ENCODE measurements at regions of chr3 and their contacts with region 1.

Region 1: DNA sequence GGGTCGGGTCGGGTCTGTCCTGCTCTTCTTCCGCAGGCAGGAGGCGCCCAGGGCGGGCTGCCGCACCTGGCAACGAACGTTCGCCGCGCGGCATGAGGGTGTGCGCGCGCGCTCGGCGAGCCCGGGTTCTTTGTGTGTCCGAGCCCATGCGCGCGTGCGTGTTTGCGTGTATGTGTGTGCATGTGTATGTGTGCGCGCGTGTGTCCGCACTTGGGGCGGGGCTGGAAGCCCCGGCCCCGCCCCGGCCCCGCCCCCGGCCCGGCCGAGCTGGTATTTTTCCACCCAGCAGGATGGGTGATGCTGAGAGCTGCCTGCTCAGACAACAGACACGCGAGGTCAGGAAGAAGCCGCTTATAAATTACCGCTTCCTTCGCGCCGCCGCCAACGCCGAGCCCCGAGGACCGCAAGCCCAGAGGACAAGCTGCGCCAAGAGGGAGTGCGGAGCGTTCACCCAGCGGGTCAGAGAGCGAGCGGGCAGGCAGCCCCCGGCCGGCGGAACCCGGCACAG is at the start of gene SLC6A6:
- DNase-seq: peak; percentile 99
- H3K4me3 ChIP-seq: peak within 1 kb of the TSS; percentile 96
- H3K27ac ChIP-seq: peak within 1 kb of the TSS; percentile 91
- H3K4me1 ChIP-seq: peaks cover 75% of the 10 kb centered on the region
- CTCF ChIP-seq: peak; percentile 62
- total RNA-seq, gene SLC6A6: 36.7 and 43.0 TPM in 2 replicates

Region 2: DNA sequence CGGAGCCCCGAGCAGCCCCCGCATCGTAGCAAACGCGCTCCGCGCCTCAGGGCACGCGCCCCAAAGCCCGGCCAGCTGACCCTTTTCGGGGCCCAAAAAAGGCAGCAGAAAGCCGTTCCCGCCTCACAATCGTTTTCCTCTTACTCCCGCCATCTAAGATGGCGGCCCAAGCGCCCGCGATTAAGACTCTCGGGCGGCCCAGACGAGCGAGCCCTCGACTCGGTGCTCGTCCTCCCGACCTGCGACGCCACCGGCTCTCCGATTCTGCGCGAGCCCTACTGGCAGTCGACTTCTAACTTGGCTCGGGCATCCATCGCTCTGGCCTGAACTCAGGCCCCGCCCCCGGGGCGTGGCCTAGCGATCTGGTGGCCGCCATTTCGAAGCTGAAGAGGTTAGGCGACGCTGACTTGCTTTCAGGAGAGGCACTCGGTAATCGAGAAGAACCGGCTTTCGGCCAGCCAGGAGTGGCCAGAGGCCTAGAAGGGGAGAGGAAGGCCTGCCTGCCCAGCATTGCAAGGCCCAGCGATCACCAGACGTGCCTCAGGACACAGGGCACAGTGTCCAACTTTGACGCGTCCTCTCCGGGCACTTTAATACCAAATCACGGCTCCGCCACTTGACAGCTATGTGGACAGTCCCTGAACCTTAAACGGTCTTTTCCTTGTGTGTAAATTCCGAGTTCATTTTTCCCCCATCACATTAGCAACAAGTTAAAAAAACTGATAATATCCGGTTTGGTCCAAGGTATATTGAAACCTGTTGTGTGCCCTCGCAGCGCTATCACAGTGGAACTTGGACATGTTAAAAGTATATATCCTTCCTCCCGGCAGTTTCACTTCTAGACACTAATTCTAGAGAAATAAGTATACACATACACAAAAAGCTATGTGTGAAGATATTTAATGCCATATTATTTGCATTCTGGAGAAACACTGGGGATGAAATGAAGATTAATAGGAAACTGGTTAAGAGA is 1738.1 kb before region 1 on chr3 and contains the start of gene RAF1:
- CTCF ChIA-PET with region 1: no interaction called
- POLR2A ChIA-PET with region 1: no interaction called
- intact Hi-C with region 1: loop called (anchors 10 kb)
- DNase-seq: peak; percentile 99
- H3K4me3 ChIP-seq: peak within 1 kb of the TSS; percentile 83
- H3K27ac ChIP-seq: peak within 1 kb of the TSS; percentile 83
- H3K4me1 ChIP-seq: peaks cover 30% of the 10 kb centered on the region
- CTCF ChIP-seq: no peak
- total RNA-seq, gene RAF1: 88.0 and 91.0 TPM in 2 replicates

Region 3: GRCh38 chr3:14377348-14378169 is 24.8 kb before region 1 on chr3:
- CTCF ChIA-PET with region 1: interaction called, 4 read pairs
- POLR2A ChIA-PET with region 1: interaction called, 14 read pairs
- intact Hi-C with region 1: loop called (anchors 1 kb)
- DNase-seq: peak; percentile 76
- H3K4me3 ChIP-seq: no peak overlapping the region
- H3K27ac ChIP-seq: peak overlapping the region; percentile 89
- H3K4me1 ChIP-seq: peaks cover 63% of the 10 kb centered on the region
- CTCF ChIP-seq: no peak

Region 4: DNA sequence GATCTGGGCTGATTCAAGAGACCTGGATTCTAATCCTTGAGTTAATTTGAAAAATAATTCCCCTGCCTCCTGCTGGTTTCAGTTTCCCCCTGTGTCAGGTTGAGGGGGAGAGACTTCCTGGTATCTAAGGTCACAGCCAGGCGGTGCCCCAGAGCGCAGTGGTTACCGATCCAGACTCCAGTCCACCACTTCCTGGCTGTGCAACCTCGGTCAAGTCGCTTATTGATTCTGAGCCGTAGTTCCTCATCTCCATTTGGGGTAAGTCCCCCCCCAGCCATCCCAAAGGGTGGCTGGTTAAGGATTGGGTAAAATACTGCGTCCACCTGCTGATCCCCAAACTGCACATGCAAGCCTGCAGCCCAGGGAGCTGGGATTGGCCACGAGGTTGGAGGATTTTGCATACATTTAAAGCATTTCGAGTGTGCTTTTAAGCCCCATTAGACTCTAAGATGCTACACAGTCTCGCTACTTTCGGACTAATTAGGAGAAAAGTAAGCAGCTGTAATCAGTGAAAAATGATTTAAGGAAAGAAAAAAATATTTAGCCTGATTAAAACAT is 23.8 kb after region 1 on chr3:
- CTCF ChIA-PET with region 1: interaction called, 20 read pairs
- POLR2A ChIA-PET with region 1: interaction called, 32 read pairs
- intact Hi-C with region 1: no loop called
- DNase-seq: peak; percentile 55
- H3K4me3 ChIP-seq: no peak overlapping the region
- H3K27ac ChIP-seq: peak overlapping the region; percentile 90
- H3K4me1 ChIP-seq: peaks cover 87% of the 10 kb centered on the region
- CTCF ChIP-seq: peak; percentile 41; the same call in 1 of the 2 replicates

Region 5: GRCh38 chr3:14461748-14462324 is 59.5 kb after region 1 on chr3:
- CTCF ChIA-PET with region 1: interaction called, 3 read pairs
- POLR2A ChIA-PET with region 1: interaction called, 8 read pairs
- intact Hi-C with region 1: loop called (anchors 1 kb)
- DNase-seq: peak; percentile 53
- H3K4me3 ChIP-seq: no peak overlapping the region
- H3K27ac ChIP-seq: no peak overlapping the region
- H3K4me1 ChIP-seq: no peaks in the 10 kb centered on the region
- CTCF ChIP-seq: peak; percentile 74

Region 6: GRCh38 chr3:14511628-14512280 is 109.4 kb after region 1 on chr3:
- CTCF ChIA-PET with region 1: no interaction called
- POLR2A ChIA-PET with region 1: no interaction called
- intact Hi-C with region 1: no loop called
- DNase-seq: no peak
- H3K4me3 ChIP-seq: no peak overlapping the region
- H3K27ac ChIP-seq: no peak overlapping the region
- H3K4me1 ChIP-seq: no peaks in the 10 kb centered on the region
- CTCF ChIP-seq: no peak

Region 7: GRCh38 chr3:14688525-14688924 is 286.2 kb after region 1 on chr3:
- CTCF ChIA-PET with region 1: no interaction called
- POLR2A ChIA-PET with region 1: interaction called, 6 read pairs
- intact Hi-C with region 1: loop called (anchors 10 kb)
- DNase-seq: peak; percentile 77
- H3K4me3 ChIP-seq: peak overlapping the region; percentile 55
- H3K27ac ChIP-seq: peak overlapping the region; percentile 91
- H3K4me1 ChIP-seq: peaks cover 77% of the 10 kb centered on the region
- CTCF ChIP-seq: no peak